Psoas muscle (tissue), 8 donors: ENCODE measurements at regions of chr18 and their contacts with region 1.

Region 1: GRCh38 chr18:4748975-4749374 is 293.9 kb upstream of the DLGAP1 start:
- DNase-seq: no peak
- ATAC-seq: no peak
- H3K4me3 ChIP-seq: no peak overlapping the region
- H3K27ac ChIP-seq: no peak overlapping the region
- H3K4me1 ChIP-seq: no peaks in the 10 kb centered on the region
- H3K27me3 ChIP-seq: no peaks in the 10 kb centered on the region
- CTCF ChIP-seq: no peak

Region 2: DNA sequence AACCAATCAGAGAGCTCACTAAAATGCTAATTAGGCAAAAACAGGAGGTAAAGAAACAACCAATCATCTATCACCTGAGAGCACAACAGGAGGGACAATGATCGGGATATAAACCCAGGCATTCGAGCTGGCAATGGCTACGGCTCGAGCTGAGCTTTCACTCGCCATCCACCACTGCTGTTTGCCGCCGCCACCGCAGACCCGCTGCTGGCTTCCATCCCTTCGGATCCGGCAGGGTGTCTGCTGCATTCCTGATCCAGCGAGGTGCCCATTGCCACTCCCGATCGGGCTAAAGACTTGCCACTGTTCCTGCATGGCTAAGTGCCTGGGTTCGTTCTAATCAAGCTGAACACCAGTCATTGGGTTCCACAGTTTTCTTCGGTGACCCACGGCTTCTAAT is 57.1 kb before region 1 on chr18:
- intact Hi-C with region 1: loop called in 1 of 2 experiments (anchors 10 kb)
- DNase-seq: no peak
- ATAC-seq: no peak
- H3K4me3 ChIP-seq: no peak overlapping the region
- H3K27ac ChIP-seq: no peak overlapping the region
- H3K4me1 ChIP-seq: no peaks in the 10 kb centered on the region
- H3K27me3 ChIP-seq: no peaks in the 10 kb centered on the region
- CTCF ChIP-seq: no peak